Right ventricle myocardium inferior (tissue), 1 donor: ENCODE measurements at regions of chr7 and their contacts with region 1.

Region 1: GRCh38 chr7:76047811-76048667 is at the starts of genes MDH2 and STYXL1:
- DNase-seq: peak; percentile 97
- ATAC-seq: peak; percentile 96
- total RNA-seq, gene MDH2: 688 TPM
- total RNA-seq, gene STYXL1: 21.6 TPM

Region 2: GRCh38 chr7:75905785-75906604 is 142.0 kb before region 1 on chr7:
- intact Hi-C with region 1: no loop called
- DNase-seq: peak; percentile 86
- ATAC-seq: peak; percentile 89

Region 3: DNA sequence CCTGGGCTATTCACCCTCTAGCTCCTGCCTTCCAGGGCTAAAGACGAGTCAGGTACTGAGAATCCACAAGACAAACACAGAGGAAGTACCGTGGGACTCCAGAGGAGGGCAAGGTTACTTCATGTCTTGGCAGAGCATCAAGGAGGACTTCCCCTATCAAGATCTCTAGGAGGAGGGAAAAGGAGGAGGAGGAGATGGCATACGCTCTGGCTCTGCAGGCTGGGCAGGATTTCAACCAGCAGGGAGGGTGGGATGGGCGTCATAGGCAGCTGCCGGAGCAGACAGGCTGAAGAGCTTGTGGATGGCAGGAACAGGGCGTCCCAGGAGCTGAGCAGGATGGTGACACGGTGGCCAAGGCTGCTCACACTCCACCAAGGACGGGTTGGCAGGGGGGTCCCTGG is 21.2 kb after region 1 on chr7:
- intact Hi-C with region 1: loop called (anchors 2 kb)
- DNase-seq: no peak
- ATAC-seq: peak; percentile 85